Left ventricle myocardium superior (tissue), 1 donor: ENCODE measurements at regions of chr1 and their contacts with region 1.

Region 1: DNA sequence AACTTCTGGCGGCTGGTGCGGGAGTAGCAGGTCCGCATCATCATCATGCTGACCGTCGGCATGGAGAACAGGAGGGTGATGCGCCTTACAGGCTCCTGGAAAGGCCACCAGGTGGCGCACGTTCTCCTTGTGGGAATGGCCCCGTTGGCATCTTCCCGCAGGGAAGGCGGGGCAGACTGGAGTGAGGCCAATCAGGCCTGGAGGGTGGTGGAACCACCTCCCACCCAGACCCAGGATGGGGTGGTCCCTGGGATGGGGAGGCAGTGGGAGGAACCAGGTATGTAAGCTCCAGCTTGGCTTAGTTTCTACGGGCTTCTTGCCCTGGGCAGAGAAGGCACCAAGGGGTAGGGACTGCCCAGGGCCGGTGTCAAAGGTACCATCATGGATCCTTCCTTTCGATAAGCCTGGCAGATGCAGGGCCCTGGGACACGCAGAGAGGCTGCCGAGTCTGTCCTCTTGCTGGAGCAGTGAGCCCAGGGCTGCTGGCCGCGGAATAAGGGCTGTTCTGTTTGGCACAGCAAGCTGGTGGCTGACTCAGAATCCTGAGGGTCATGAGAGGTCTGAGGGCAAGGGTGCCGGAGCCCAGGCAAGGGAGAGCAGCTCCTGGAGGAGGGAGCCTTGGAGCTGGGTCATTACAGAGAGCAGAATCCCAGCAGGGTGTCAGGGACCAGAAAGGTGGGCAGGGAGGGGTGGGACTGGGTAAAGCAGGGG is 8.7 kb upstream of the LGR6 start:
- DNase-seq: peak; percentile 90
- ATAC-seq: peak; percentile 76

Region 2: DNA sequence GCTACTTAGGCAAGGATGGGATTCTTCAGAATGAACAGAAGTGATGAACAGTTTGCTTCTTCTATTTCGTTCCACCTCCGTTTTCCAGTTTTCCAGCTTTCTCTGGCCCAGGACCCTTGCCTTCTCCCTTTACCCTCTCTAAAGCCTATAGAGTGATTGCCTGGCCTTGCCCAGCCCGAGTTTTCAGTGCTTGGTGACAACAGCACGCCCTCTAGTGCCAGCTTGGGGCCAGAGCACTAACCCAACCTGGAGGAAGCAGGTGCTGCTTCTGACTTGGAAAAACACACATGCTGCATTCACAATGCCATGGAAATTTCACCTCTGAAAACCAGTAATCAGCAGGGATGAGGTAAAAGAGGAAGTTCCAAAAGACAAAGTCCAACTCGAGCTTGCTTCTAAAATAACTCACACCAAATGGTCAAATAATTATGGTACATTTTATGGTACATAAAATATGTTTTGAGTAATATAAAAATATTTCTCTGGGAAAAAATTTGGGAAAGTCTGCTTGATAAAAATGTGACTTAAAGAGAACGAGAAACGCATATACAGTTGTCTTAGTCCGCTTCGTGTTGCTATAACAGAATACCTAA is 130.8 kb after region 1 on chr1:
- intact Hi-C with region 1: loop called (anchors 10 kb)
- DNase-seq: peak; percentile 82
- ATAC-seq: peak; percentile 89

Region 3: GRCh38 chr1:202716654-202717053 is 531.7 kb after region 1 on chr1:
- intact Hi-C with region 1: loop called (anchors 5 kb)
- DNase-seq: no peak
- ATAC-seq: no peak

Region 4: DNA sequence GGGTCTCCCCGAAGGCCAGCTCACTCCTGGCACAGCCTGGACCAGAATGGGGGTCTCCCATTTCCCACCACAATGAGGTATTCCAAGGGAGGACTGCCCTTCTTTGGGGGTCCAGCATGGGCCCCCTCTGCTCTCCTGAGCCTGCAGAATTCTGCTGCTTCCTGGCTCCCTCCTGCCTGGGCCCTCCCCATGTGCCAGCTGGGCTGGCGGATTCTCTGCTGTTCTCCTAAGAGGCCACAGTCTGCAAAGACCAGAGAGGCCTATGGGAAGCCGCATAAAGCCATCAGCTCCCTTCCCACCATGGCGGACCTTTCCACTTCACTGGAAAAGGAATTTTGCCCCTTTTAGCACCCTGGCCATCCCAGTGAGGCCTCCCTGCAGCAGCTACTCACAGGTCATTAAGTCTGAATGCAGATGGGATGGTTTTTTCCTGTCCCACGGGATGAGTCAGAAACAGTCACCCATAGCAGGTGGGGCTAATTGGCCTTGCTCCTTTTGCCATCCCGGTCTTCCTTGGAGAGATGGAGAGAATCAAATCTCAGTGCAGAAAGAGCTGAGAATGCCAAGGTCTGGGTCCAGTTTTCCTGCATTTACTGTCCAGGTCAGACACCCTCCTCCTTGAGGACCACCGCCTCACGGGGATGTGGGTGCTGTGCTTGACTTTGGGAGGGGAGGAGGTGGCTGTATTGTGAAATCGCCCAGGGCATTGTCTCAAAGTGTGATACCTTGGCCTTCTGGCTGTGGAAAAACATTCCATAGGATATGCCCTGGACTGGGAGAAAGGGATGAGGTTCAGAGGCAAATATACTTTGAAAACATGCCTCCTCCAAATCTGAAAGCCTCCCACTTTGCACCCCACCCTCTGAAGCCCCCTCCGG is 967.5 kb after region 1 on chr1:
- intact Hi-C with region 1: no loop called
- DNase-seq: no peak
- ATAC-seq: no peak